ENCODE measurements at regions of chr9 and their contacts with region 1.

Region 1: DNA sequence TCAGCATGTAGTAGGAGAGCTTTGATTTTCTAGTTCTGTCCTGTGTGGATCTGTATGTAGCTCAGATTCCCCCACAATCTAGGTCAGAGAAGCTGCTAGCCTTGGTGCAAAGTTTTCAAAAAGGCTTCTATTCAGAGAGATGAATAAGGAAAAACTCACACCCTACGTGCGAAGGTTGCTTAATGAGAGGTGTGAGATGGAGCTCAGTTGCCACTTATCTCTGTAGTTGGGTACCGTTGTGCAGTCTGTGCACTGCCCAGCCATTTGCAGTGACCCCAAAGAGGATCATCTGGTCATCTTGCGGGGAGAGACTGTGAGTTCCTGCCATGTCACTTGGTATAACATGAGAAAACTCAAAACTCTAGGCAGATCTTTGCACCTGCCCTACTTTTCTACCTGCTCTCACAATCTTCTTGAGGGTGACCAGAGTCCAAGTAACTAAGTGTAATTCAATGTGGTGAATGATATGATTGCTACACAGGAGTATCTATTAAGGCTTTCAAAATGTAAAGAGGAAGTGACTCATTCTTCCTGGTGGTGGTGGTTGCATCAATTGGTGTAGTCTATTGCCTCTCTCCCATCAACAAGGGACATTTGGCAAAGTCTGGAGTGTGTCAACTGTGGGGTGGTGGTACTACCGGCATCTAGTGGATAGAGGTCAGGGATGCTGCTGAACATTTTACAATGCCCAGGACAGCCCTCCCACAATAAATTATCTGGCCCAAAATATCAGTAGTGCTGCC is 65.2 kb downstream of the TMC1 start:
- DNase-seq: peak in 1 of 2 donors; percentile 39
- ATAC-seq: peak; percentile 64 to 87
- H3K4me3 ChIP-seq: no peak overlapping the region
- H3K27ac ChIP-seq: peak overlapping the region in 3 of 4 donors; percentile 36 to 69 (median 65)
- H3K4me1 ChIP-seq: peaks cover 5 to 12% of the 10 kb centered on the region in 2 donors
- H3K27me3 ChIP-seq: no peaks in the 10 kb centered on the region
- CTCF ChIP-seq: peak in 1 of 5 experiments; percentile 9
- POLR2A ChIP-seq: no peak

Region 2: DNA sequence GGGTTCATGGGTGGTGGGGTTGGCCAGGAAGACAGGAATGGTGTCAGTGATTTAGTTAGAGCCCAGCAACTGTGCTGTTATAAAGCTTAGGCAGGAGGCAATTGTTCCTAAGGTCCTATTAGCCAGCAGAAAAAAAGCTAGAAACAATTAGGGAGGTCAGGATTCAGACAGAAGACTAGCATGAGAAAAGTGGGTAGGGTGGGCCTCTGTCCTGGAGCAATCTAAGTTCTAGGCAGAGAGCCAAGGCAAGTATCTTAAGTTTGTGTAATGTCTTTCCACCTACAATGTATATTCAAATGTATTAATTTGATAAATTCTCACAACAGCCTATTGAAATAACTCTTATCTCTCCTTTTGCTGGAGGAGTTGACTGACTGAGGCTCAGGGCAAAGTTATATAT is 215.4 kb before region 1 on chr9:
- in situ Hi-C with region 1: loop called in 3 of 4 experiments (anchors 10 to 25 kb)
- intact Hi-C with region 1: no loop called
- DNase-seq: no peak
- ATAC-seq: no peak
- H3K4me3 ChIP-seq: no peak overlapping the region
- H3K27ac ChIP-seq: no peak overlapping the region
- H3K4me1 ChIP-seq: peaks cover 0 to 14% of the 10 kb centered on the region in 2 donors
- H3K27me3 ChIP-seq: no peaks in the 10 kb centered on the region
- CTCF ChIP-seq: no peak
- POLR2A ChIP-seq: no peak

Region 3: GRCh38 chr9:72424131-72424530 is 162.4 kb before region 1 on chr9:
- in situ Hi-C with region 1: no loop called
- intact Hi-C with region 1: no loop called
- DNase-seq: no peak
- ATAC-seq: no peak
- H3K4me3 ChIP-seq: no peak overlapping the region
- H3K27ac ChIP-seq: no peak overlapping the region
- H3K4me1 ChIP-seq: no peaks in the 10 kb centered on the region
- H3K27me3 ChIP-seq: no peaks in the 10 kb centered on the region
- CTCF ChIP-seq: no peak
- POLR2A ChIP-seq: no peak

Measured in gastrocnemius medialis (tissue), 4 donors.